ENCODE measurements at regions of chr11 and their contacts with region 1.

Region 1: DNA sequence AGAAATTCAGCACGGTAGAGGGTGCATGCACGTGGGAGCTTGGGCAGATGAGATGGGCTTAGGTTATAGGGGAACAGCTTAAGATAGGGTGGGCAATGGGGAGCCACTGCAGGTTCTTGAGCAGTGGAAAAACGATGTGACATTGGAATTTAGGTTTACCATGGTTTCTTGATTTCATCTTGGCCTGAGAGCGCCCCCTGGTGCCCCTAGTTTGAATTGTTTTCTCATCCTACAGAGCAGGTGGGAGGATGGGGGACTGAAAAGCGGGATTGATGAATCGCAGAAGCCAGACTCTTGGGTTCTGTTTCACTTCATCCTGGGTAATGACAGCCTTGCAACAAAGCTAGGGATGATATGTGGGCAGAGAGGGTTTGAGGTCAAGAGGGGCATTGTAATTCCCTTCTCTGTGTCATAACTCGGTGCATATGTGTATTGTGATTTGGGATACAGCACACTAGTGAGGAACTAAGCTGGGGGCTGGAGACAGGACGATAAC is 6.7 kb upstream of the MCAM start:
- DNase-seq: peak; percentile 61 to 82 (median 77)
- ATAC-seq: peak; percentile 50
- H3K4me3 ChIP-seq: no peak overlapping the region
- H3K4me3 Mint-ChIP-seq: peak overlapping the region in 4 of 10 donors; percentile 10 to 54 (median 44)
- H3K27ac ChIP-seq: no peak overlapping the region
- H3K27ac Mint-ChIP-seq: peak overlapping the region in 2 of 9 donors; percentile 15 to 57
- H3K4me1 ChIP-seq: no peaks in the 10 kb centered on the region
- H3K4me1 Mint-ChIP-seq: peaks cover 11 to 33% (median 26%) of the 10 kb centered on the region in 7 donors
- H3K27me3 ChIP-seq: no peaks in the 10 kb centered on the region
- H3K27me3 Mint-ChIP-seq: peaks cover 0 to 17% (median 11%) of the 10 kb centered on the region in 5 donors

Region 2: GRCh38 chr11:119057000-119057769 is 266.4 kb before region 1 on chr11 and contains the start of gene HYOU1:
- CTCF ChIA-PET with region 1: no interaction called
- POLR2A ChIA-PET with region 1: interaction called, 3 read pairs
- intact Hi-C with region 1: loop called in 1 of 2 experiments (anchors 2 kb)
- DNase-seq: peak; percentile 97 to 98 (median 98)
- ATAC-seq: peak; percentile 98
- H3K4me3 ChIP-seq: peak within 1 kb of the TSS; percentile 73
- H3K4me3 Mint-ChIP-seq: peak within 1 kb of the TSS; percentile 90 to 99 (median 95)
- H3K27ac ChIP-seq: peak within 1 kb of the TSS; percentile 96
- H3K27ac Mint-ChIP-seq: peak within 1 kb of the TSS; percentile 86 to 99 (median 95)
- H3K4me1 ChIP-seq: peaks cover 18 to 20% of the 10 kb centered on the region in 2 donors
- H3K4me1 Mint-ChIP-seq: peaks cover 22 to 44% (median 35%) of the 10 kb centered on the region in 7 donors
- H3K27me3 ChIP-seq: no peaks in the 10 kb centered on the region
- H3K27me3 Mint-ChIP-seq: no peaks in the 10 kb centered on the region
- total RNA-seq, gene HYOU1: 77.8 to 198 (median 110) TPM

Region 3: DNA sequence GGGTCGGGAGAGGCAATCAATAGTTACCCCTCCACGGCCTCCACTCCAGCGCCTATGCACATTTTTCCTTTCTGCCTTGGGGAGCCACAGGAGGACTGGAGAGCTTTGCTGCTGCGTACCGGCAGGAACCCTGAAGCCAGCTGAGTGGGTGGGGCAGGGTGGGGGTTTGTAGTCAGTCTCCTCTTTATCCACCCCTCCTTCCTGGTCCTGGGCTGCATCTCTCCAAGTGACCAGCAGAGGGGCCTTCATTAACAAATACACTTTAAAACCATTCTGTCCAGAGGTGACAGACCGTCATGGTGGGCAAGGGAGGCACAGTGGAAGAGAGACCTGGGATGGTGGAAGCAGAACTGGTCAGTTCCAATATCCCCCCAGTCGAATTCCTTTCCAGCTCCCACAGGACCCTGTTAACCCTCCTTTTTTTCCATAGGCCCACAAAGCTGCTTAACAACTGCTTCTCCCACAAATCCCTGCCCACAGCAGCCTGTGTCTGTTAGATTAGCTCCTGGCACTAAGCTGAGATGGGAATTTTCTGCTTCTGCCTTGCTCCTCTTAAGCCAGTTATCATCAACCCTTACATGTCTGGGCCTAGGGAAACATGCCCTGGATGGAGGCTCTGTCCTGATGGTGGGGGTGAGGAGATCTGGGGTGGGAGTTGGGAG is 178.6 kb before region 1 on chr11:
- CTCF ChIA-PET with region 1: no interaction called
- POLR2A ChIA-PET with region 1: no interaction called
- intact Hi-C with region 1: loop called in 1 of 2 experiments (anchors 1 kb)
- DNase-seq: no peak
- ATAC-seq: peak; percentile 80
- H3K4me3 ChIP-seq: no peak overlapping the region
- H3K4me3 Mint-ChIP-seq: no peak overlapping the region
- H3K27ac ChIP-seq: no peak overlapping the region
- H3K27ac Mint-ChIP-seq: peak overlapping the region in 1 of 9 donors; percentile 59
- H3K4me1 ChIP-seq: peaks cover 0 to 11% of the 10 kb centered on the region in 2 donors
- H3K4me1 Mint-ChIP-seq: peaks cover 5 to 18% (median 13%) of the 10 kb centered on the region in 7 donors
- H3K27me3 ChIP-seq: no peaks in the 10 kb centered on the region
- H3K27me3 Mint-ChIP-seq: peaks cover 31 to 51% (median 36%) of the 10 kb centered on the region in 5 donors

Region 4: GRCh38 chr11:119205574-119206510 is 117.7 kb before region 1 on chr11 and contains the start of gene CBL:
- CTCF ChIA-PET with region 1: interaction called, 38 read pairs
- POLR2A ChIA-PET with region 1: interaction called, 3 read pairs
- intact Hi-C with region 1: loop called (anchors 1 kb)
- DNase-seq: peak; percentile 83 to 99 (median 93)
- ATAC-seq: peak; percentile 97
- H3K4me3 ChIP-seq: peak within 1 kb of the TSS; percentile 88
- H3K4me3 Mint-ChIP-seq: peak within 1 kb of the TSS; percentile 88 to 100 (median 98)
- H3K27ac ChIP-seq: peak within 1 kb of the TSS; percentile 91
- H3K27ac Mint-ChIP-seq: peak within 1 kb of the TSS; percentile 86 to 98 (median 94)
- H3K4me1 ChIP-seq: peaks cover 7 to 23% of the 10 kb centered on the region in 2 donors
- H3K4me1 Mint-ChIP-seq: peaks cover 18 to 49% (median 41%) of the 10 kb centered on the region in 7 donors
- H3K27me3 ChIP-seq: no peaks in the 10 kb centered on the region
- H3K27me3 Mint-ChIP-seq: peaks cover 0 to 3% (median 0%) of the 10 kb centered on the region in 5 donors
- total RNA-seq, gene CBL: 37.0 to 51.8 (median 40.5) TPM

Region 5: DNA sequence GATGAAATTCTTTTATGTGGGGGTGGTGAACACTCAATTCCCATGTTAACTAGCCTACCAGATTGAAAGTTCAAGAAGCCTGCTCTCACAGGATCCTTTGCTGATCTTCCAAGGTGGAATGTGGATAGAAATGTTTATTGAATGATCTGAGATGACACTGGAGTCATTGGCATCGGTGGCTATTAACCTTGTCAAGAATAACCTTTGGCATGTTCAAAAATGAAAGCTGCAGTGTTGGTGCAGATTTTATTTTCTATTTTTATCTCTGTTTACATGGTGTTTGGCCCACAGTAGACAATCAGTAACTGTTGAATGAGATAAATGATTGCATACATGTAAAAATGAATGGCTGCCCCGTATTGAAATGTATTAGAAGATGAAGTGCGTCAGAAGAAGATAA is 25.6 kb before region 1 on chr11:
- CTCF ChIA-PET with region 1: interaction called, 19 read pairs
- POLR2A ChIA-PET with region 1: interaction called, 4 read pairs
- intact Hi-C with region 1: no loop called
- DNase-seq: no peak
- ATAC-seq: no peak
- H3K4me3 ChIP-seq: no peak overlapping the region
- H3K4me3 Mint-ChIP-seq: no peak overlapping the region
- H3K27ac ChIP-seq: no peak overlapping the region
- H3K27ac Mint-ChIP-seq: peak overlapping the region in 3 of 9 donors; percentile 19 to 64 (median 28)
- H3K4me1 ChIP-seq: no peaks in the 10 kb centered on the region
- H3K4me1 Mint-ChIP-seq: peaks cover 0 to 16% (median 6%) of the 10 kb centered on the region in 7 donors
- H3K27me3 ChIP-seq: no peaks in the 10 kb centered on the region
- H3K27me3 Mint-ChIP-seq: no peaks in the 10 kb centered on the region

Region 6: DNA sequence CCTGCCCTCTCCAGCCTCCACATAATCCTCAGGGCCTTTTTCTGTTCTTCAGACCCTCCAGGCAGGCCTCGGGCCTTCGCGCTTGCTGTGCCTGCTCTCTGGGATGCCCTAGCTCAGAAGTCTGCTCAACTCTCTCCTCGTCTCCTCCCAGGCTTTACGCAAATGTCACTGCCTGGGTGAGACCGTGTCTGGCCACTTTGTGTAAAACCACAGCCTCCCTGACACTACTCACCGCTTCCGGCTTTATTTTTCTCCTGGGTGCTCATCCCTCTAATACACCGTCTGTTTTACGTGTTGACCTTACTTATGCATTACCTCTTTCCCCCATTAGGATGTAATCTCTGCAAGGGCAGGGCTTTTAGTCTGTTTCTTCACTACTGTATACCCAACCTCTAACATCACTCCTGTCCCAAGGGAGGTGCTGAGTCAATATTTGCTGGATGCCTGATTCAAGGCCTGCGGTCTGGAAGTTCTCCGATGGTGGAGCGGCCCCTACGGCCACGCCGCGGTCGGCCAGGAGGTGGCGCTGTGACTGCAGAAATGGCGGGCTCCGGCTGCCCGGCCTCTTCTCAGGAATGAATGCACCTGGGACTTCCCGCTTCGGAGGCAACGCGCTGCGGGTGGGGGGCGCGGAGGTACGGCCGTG is 157.6 kb after region 1 on chr11:
- CTCF ChIA-PET with region 1: no interaction called
- POLR2A ChIA-PET with region 1: no interaction called
- intact Hi-C with region 1: no loop called
- DNase-seq: peak in 8 of 9 donors; percentile 14 to 88 (median 52)
- ATAC-seq: peak; percentile 73
- H3K4me3 ChIP-seq: no peak overlapping the region
- H3K4me3 Mint-ChIP-seq: no peak overlapping the region
- H3K27ac ChIP-seq: no peak overlapping the region
- H3K27ac Mint-ChIP-seq: peak overlapping the region in 1 of 9 donors; percentile 58
- H3K4me1 ChIP-seq: no peaks in the 10 kb centered on the region
- H3K4me1 Mint-ChIP-seq: peaks cover 0 to 1% (median 0%) of the 10 kb centered on the region in 7 donors
- H3K27me3 ChIP-seq: no peaks in the 10 kb centered on the region
- H3K27me3 Mint-ChIP-seq: peaks cover 2 to 28% (median 25%) of the 10 kb centered on the region in 5 donors

Measured in naive thymus-derived CD4-positive, alpha-beta T cell (primary cell).